Endothelial cell of umbilical vein (primary cell): ENCODE measurements at regions of chr21 and their contacts with region 1.

Region 1: DNA sequence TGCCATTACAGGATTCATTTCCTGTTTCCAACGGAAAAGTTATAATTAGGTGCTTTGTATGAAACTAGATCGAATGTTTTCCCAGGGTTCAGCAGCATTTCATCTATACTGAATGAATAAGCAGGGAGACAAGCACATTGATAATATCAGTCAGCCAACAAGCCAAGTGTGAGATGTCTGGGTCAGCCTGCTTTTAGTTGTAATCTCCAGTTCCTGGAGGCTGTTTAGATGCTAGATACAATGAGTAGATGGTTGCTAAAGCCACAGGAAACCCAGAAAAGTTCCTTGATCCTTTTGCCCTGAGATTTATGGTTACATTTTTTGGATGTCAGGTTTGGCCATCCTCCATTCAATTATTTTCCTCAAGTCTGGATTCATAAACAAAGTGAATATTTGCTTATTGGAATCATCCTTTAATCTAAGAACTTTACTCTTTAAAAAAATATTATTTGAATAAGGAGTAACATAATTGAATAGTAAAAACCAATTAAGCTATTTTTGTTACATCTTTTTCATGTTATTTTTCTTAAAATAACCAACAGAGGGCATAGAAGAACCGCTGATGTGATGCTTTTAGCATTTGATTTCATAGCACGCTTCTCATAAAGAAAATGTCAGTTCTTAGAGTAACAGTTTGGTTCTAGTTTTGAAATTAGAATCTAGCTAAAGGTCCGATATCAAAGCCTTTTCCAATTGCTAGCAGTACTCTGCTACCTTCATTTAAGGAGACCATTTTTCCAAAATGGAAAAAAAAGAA is 76.6 kb downstream of the HSPA13 start:
- DNase-seq: peak; percentile 43
- H3K4me3 ChIP-seq: no peak overlapping the region
- H3K27ac ChIP-seq: peak overlapping the region; percentile 10
- H3K4me1 ChIP-seq: peaks cover 8% of the 10 kb centered on the region
- H3K27me3 ChIP-seq: no peaks in the 10 kb centered on the region
- CTCF ChIP-seq: no peak
- POLR2A ChIP-seq: no peak

Region 2: GRCh38 chr21:14120091-14120734 is 186.1 kb before region 1 on chr21:
- CTCF ChIA-PET with region 1: no interaction called
- POLR2A ChIA-PET with region 1: no interaction called
- dilution Hi-C with region 1: no loop called
- intact Hi-C with region 1: no loop called
- DNase-seq: no peak
- H3K4me3 ChIP-seq: no peak overlapping the region
- H3K27ac ChIP-seq: no peak overlapping the region
- H3K4me1 ChIP-seq: no peaks in the 10 kb centered on the region
- H3K27me3 ChIP-seq: no peaks in the 10 kb centered on the region
- CTCF ChIP-seq: no peak
- POLR2A ChIP-seq: no peak

Region 3: DNA sequence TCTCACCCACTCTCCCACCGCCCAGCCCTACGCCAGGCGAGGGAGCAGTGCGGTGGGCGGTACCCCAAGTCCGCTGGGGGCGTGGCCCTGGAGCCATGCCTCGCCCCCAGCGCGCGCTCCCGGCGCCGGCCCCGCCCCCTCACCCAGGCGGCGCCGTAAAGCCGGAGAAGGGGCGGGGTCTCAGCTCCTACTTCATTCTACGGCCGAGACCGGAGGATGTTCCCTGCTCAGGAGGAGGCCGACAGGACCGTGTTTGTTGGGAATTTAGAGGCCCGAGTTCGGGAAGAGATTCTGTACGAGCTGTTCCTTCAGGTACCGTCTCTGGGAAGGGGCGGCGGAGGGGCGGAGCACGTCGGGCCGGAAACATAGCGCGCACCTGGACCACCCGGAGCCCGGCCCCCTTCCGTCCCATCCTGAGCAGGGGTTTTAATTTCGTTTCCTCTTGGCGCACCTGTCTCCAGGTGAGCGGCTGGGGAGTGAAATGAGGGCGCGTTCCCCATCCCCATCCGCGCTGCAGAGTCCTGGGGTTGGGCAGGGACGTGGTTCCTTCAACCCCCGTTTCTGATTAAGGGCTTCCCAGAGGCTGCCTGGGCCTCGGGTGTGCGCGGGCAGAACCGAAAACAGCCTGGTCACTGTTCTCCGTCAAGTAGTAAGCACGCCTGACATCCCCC is 90.2 kb before region 1 on chr21 and contains the start of gene RBM11:
- CTCF ChIA-PET with region 1: no interaction called
- POLR2A ChIA-PET with region 1: no interaction called
- dilution Hi-C with region 1: no loop called
- intact Hi-C with region 1: no loop called
- DNase-seq: peak; percentile 8
- H3K4me3 ChIP-seq: peak within 1 kb of the TSS in 2 of 3 experiments; percentile 38 to 50
- H3K27ac ChIP-seq: no peak within 1 kb of the TSS
- H3K4me1 ChIP-seq: no peaks in the 10 kb centered on the region
- H3K27me3 ChIP-seq: peaks cover 0 to 3% of the 10 kb centered on the region in 2 experiments
- CTCF ChIP-seq: no peak
- POLR2A ChIP-seq: no peak
- total RNA-seq, gene RBM11: not detected in 2 replicates

Region 4: DNA sequence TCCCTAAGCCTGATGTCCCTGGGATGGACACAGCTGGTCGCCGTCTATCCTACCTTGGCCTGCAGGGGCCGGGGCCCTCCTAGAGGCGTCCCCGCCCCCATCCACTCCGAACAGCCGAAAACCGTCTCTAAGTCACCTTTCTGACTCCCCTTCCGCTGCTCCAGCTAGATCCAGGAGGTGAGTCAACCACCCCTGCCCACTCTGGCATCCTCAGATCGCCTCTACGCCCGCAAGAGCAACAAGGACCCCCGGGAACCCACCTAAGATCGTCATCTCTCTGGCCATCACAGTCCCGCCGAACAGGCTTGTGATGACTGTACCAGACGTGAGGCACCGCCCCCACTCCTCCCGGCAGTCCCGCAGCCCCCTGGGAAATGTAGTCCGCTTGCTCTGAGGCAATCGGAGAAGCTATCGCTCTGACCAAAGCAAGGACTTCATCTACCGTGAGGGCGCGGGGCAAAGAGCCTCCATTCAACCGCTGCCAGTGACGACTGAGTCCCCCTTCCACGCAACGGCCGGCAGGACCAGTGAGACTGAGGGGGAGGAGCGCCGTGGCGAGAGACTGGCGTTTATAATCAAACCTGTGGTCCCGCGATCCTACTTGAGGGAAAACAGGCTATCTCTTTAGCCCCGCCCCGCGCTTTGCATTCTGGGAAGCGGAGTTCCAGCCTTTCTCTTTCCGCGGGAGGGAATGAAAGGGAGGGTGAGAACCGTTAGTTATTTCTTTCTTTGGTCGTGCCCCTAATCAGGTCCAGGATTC is 76.7 kb after region 1 on chr21 and contains the start of gene HSPA13:
- CTCF ChIA-PET with region 1: interaction called, 5 read pairs
- POLR2A ChIA-PET with region 1: no interaction called
- dilution Hi-C with region 1: no loop called
- intact Hi-C with region 1: loop called (anchors 1 kb)
- DNase-seq: peak; percentile 100
- H3K4me3 ChIP-seq: peak within 1 kb of the TSS; percentile 85 to 91 (median 85)
- H3K27ac ChIP-seq: peak within 1 kb of the TSS; percentile 93
- H3K4me1 ChIP-seq: peaks cover 26% of the 10 kb centered on the region
- H3K27me3 ChIP-seq: no peaks in the 10 kb centered on the region
- CTCF ChIP-seq: peak in 1 of 2 donors; percentile 14
- POLR2A ChIP-seq: peak; percentile 76
- total RNA-seq, gene HSPA13: 40.4 and 44.8 TPM in 2 replicates

Region 5: DNA sequence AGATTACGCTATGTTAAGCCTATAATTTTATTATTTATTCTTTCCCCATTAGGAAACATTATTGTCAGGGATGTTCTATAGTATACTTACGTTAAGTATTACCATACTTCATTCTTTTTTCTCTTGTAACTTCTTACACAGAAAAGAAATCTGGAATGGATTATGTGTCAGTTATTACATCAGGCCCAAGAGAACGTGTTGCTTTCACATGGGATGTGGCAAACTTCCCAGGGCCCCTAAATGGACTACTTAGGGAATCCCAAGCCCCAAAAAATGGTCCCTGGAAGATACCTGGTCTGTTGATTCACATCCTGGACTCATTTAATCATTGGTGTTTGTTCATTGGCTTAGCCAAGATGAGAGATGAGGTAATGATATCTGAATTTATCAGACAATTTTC is 508.7 kb after region 1 on chr21:
- CTCF ChIA-PET with region 1: no interaction called
- POLR2A ChIA-PET with region 1: no interaction called
- dilution Hi-C with region 1: no loop called
- intact Hi-C with region 1: no loop called
- DNase-seq: no peak
- H3K4me3 ChIP-seq: no peak overlapping the region
- H3K27ac ChIP-seq: no peak overlapping the region
- H3K4me1 ChIP-seq: no peaks in the 10 kb centered on the region
- H3K27me3 ChIP-seq: no peaks in the 10 kb centered on the region
- CTCF ChIP-seq: no peak
- POLR2A ChIP-seq: no peak